ENCODE measurements at regions of chr4 and their contacts with region 1.

Region 1: GRCh38 chr4:72767618-72768302 is 198.7 kb upstream of the ADAMTS3 start:
- DNase-seq: peak; percentile 54
- H3K4me3 ChIP-seq: no peak overlapping the region
- H3K27ac ChIP-seq: no peak overlapping the region
- H3K4me1 ChIP-seq: no peaks in the 10 kb centered on the region
- H3K27me3 ChIP-seq: peaks cover 3% of the 10 kb centered on the region
- CTCF ChIP-seq: no peak

Region 2: DNA sequence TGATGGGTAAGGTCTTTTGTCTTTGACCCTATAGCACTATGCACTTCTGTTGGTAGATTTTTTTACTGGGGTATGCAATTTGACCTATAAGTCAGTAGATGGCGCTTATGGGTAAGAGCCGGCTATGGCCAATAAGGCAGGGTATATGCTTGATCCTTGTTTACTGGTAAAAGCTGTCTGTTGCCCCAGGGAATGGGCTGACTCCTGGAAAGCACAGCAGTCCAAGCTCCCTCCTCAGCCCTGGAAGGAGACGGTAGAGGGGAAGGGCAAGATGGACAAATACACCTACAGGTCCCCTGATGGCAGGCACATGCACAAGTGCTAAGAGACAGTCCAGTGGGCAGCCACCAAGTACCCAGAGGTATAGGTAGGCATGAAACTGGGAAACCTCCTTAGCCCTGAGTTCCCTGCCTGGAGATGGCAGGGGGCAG is 262.4 kb before region 1 on chr4:
- CTCF ChIA-PET with region 1: no interaction called
- dilution Hi-C with region 1: no loop called
- in situ Hi-C with region 1: no loop called
- intact Hi-C with region 1: loop called (anchors 5 kb)
- DNase-seq: peak; percentile 25
- H3K4me3 ChIP-seq: no peak overlapping the region
- H3K27ac ChIP-seq: no peak overlapping the region
- H3K4me1 ChIP-seq: no peaks in the 10 kb centered on the region
- H3K27me3 ChIP-seq: peaks cover 2% of the 10 kb centered on the region
- CTCF ChIP-seq: peak; percentile 55 to 86

Region 3: DNA sequence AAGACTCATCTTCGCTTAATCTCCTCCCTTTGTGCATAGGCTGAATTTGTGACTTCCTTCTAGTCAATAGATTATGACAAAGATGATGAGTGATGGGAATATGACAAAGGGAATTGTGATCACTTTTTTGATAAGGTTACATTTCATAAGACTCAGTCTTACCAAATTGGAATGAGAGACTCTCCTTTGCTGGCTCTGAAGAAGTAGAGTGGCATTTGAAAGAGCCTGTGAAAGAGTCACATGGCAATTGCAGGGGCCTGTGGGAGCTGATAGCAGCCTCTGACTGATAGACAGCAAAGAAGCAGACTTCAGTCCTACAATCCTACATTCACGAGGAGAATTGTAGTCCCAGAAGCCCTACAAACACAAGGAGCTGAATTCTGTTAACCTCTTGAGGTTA is 153.8 kb before region 1 on chr4:
- CTCF ChIA-PET with region 1: no interaction called
- dilution Hi-C with region 1: no loop called
- in situ Hi-C with region 1: no loop called
- intact Hi-C with region 1: no loop called
- DNase-seq: no peak
- H3K4me3 ChIP-seq: no peak overlapping the region
- H3K27ac ChIP-seq: no peak overlapping the region
- H3K4me1 ChIP-seq: no peaks in the 10 kb centered on the region
- H3K27me3 ChIP-seq: peaks cover 11% of the 10 kb centered on the region
- CTCF ChIP-seq: no peak

Region 4: GRCh38 chr4:72701987-72702819 is 65.6 kb before region 1 on chr4:
- CTCF ChIA-PET with region 1: no interaction called
- dilution Hi-C with region 1: loop called (anchors 5 kb)
- in situ Hi-C with region 1: no loop called
- intact Hi-C with region 1: no loop called
- DNase-seq: peak; percentile 40
- H3K4me3 ChIP-seq: peak overlapping the region; percentile 39 to 75 (median 57)
- H3K27ac ChIP-seq: no peak overlapping the region
- H3K4me1 ChIP-seq: no peaks in the 10 kb centered on the region
- H3K27me3 ChIP-seq: no peaks in the 10 kb centered on the region
- CTCF ChIP-seq: peak; percentile 68